Activated CD4-positive, alpha-beta memory T cell treated with anti-CD3 and anti-CD28 coated beads, Interleukin-2, amount 10 ng/mL, durations not matched to agents 7 days and 5 days (primary cell): ENCODE measurements at regions of chr11 and their contacts with region 1.

Region 1: DNA sequence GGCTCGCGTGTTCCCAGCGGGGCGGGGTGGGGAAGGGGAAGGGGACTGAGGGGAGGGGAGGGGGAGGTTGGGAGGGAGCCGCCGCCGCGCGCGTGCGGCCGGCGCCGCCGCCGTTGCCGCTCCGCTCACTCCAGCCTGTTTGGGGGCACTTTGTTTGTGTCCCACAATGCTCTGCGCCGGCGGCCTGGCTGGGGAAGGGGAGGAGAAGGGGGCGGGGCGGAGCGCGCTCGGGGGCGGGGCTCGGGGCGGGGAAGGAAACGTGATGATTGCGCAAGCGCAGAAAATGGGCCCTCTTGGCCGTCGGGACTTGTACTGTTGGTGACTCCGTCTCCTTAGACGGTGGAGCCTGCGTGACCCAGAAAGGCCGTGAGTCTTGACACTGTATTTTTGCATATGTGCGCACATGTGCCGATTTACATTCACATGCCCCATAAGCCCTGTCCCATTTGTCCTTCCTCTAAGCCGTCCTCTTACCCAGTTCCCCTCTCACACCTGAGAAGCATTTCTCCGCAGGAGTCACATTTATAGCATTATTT is at the start of gene ZBTB44:
- DNase-seq: peak; percentile 93
- H3K4me3 Mint-ChIP-seq: peak within 1 kb of the TSS; percentile 97
- H3K27ac Mint-ChIP-seq: peak within 1 kb of the TSS; percentile 95
- H3K4me1 Mint-ChIP-seq: peaks cover 45% of the 10 kb centered on the region
- H3K27me3 Mint-ChIP-seq: no peaks in the 10 kb centered on the region
- total RNA-seq, gene ZBTB44: 51.2 to 51.7 TPM

Region 2: DNA sequence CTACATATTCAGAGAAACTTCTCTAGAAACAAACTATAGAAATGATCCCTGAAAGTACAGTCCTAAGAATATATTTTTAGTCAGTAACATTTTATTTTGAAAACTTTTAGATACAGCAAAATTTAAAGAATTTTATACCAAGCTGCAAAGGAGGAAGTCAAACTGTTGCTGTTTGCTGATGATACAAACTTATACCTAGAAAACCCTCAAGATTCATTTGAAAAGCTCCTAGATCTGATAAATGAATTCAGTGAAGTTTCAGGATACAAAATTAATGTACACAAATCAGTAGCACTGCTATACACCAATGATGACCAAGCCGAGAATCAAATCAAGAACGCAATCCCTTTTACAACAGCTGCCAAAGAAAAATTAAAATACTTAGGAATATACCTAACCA is 10.2 kb before region 1 on chr11:
- CTCF ChIA-PET with region 1: no interaction called
- POLR2A ChIA-PET with region 1: interaction called, 16 read pairs
- DNase-seq: no peak
- H3K4me3 Mint-ChIP-seq: no peak overlapping the region
- H3K27ac Mint-ChIP-seq: peak overlapping the region; percentile 10
- H3K4me1 Mint-ChIP-seq: peaks cover 52% of the 10 kb centered on the region
- H3K27me3 Mint-ChIP-seq: no peaks in the 10 kb centered on the region

Region 3: DNA sequence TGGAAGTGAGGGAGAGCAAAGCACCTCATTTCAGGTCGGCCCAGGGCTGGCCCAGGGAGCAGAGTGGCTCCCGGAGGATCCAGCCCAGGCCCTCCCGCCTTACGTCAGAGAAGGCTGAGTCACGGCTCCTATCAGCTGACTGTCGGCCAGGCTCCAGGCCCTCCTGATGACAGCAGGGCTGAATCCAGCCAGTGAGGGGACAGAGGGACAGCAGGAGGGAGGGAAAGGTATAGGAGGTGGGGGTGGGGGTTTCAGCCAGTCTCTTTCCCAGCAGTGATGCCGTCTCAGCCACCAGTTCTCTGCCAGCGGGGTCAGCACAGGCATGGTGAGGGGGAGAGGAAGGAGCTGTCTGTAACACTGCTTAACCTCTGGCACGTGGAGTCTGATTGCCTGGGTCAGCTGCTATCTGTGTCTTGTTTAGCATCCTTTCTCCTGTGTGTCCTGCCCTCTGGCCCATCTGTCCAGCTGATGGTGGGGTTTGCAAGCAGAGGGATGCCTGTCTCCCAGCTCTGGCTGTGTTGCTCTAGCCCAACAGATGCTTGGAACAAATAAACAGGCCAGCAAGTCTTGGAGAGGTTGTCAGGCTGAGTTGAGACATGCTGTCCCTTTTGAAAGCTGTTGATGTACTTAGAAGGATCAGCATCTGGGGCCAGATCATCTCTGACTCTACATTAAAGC is 207.6 kb after region 1 on chr11:
- CTCF ChIA-PET with region 1: no interaction called
- POLR2A ChIA-PET with region 1: no interaction called
- DNase-seq: no peak
- H3K4me3 Mint-ChIP-seq: no peak overlapping the region
- H3K27ac Mint-ChIP-seq: no peak overlapping the region
- H3K4me1 Mint-ChIP-seq: no peaks in the 10 kb centered on the region
- H3K27me3 Mint-ChIP-seq: peaks cover 18% of the 10 kb centered on the region

Region 4: GRCh38 chr11:130553306-130553705 is 238.5 kb after region 1 on chr11:
- CTCF ChIA-PET with region 1: no interaction called
- POLR2A ChIA-PET with region 1: no interaction called
- DNase-seq: no peak
- H3K4me3 Mint-ChIP-seq: no peak overlapping the region
- H3K27ac Mint-ChIP-seq: no peak overlapping the region
- H3K4me1 Mint-ChIP-seq: no peaks in the 10 kb centered on the region
- H3K27me3 Mint-ChIP-seq: peaks cover 19% of the 10 kb centered on the region